ENCODE measurements at regions of chr10 and their contacts with region 1.

Region 1: DNA sequence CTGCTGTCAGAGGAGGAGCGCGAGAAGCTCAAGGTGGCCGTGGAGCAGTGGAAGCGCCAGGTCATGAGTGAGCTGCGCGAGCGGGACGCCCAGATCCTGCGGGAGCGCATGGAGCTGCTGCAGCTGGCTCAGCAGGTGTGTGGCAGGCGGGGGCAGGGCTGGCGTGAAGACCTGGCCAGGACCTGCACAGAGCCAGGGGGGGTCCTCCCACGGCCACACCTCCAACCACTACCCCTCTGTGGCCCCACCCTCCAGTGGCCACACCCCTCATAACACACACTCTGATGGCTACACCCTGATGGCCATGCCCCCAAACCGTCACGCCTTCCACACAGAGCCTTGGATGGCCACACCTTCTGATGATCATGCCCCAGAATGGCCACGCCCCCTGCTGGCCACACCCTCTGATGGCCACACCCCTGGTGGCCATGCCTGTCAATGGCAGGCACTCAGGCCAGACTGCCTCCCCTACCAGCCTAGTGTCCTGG is 23.4 kb upstream of the DPYSL4 start:
- DNase-seq: no peak
- H3K4me3 ChIP-seq: no peak overlapping the region
- H3K27ac ChIP-seq: no peak overlapping the region
- H3K4me1 ChIP-seq: no peaks in the 10 kb centered on the region
- H3K27me3 ChIP-seq: no peaks in the 10 kb centered on the region
- CTCF ChIP-seq: peak; percentile 31; the same call in 1 of the 2 replicates

Region 2: DNA sequence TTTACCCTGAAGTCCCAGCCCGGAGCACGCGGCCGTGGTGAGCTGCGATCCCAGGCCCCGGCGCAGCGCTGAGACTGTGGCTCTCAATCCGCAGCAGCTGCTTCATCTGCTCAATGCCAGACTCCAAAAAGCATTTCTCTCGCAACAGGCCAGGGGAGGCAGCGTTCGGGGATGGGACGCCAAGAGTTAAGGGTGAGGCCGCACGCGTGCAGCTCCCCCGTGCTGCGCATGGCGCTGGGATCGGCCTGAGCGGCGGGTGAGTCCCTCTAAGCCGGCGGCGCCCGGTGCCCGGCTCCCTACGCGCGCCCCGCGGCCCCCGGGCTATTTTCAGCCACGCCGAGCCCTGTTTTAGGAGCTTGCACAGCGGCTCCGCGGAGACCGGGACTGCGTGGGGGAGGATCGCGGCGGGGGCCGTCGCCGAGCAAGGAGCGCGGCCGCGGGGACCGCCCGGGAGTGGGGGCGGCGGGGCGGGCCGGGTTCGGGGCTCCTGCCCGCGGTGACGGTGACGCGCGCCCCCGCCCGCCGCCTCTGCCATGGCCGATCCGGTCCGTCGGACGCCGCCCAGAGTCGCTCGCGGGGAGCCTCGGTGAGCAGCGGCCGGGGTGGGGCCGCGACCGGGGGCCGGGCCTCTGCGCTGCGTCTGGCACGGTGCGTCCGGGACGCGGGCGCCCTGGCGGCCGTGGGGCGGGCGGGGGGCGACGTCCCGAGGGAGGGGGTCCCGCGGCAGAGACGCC is 127.0 kb before region 1 on chr10:
- CTCF ChIA-PET with region 1: no interaction called
- POLR2A ChIA-PET with region 1: no interaction called
- intact Hi-C with region 1: no loop called
- DNase-seq: peak in 1 of 2 experiments; percentile 16
- H3K4me3 ChIP-seq: no peak overlapping the region
- H3K27ac ChIP-seq: no peak overlapping the region
- H3K4me1 ChIP-seq: no peaks in the 10 kb centered on the region
- H3K27me3 ChIP-seq: peaks cover 50% of the 10 kb centered on the region
- CTCF ChIP-seq: no peak

Region 3: DNA sequence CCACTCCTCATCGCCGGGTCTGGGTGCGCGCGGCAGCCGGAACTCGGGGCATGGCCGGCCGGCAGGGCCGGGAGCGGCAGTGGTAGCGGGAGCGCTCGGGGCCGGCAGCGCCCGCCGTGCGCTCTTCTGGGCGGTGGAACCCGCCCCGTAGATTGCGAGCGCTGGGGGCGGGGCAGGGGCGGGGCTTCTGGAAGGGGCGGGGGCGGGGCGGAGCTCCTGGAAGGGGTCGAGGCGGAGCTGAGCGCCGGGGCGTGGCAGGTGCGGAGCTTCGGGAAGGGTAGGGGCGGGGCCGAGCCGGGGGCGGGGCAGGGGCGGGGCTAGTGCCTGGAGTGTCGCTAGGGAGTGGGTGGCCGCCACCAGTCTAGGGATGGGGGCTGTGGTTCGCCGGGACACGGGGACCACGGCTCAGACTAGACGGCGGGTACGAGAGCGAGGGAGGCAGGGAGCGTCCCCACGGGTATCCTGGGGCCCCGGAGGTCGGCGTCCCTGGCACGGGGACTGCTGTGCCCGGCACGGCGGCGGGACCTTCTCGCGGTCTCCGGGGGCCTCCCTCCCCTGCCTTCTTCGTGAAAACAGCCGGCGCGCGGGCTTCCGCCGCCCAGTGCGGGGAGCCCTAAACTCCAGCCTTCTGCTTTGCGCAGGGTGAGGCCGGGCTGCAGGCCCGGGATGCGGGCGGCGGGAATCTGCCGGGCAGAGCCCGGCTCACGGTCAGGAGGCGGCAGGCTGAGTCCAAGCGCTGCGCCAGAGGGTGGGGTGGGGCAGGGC is 144.7 kb after region 1 on chr10 and contains the start of gene STK32C:
- CTCF ChIA-PET with region 1: no interaction called
- POLR2A ChIA-PET with region 1: interaction called, 10 read pairs
- intact Hi-C with region 1: no loop called
- DNase-seq: peak; percentile 51 to 78
- H3K4me3 ChIP-seq: peak within 1 kb of the TSS; percentile 73
- H3K27ac ChIP-seq: no peak within 1 kb of the TSS
- H3K4me1 ChIP-seq: peaks cover 5% of the 10 kb centered on the region; the same call in 1 of the 2 replicates
- H3K27me3 ChIP-seq: no peaks in the 10 kb centered on the region
- CTCF ChIP-seq: no peak
- total RNA-seq, gene STK32C: 13.9 and 21.8 TPM in 2 replicates